MCF 10A (cell line): ENCODE measurements at regions of chr10 and their contacts with region 1.

Region 1: GRCh38 chr10:4344511-4344994 is 481.5 kb upstream of the AKR1E2 start:
- DNase-seq: peak; percentile 99
- H3K4me3 Mint-ChIP-seq: peak overlapping the region; percentile 48
- H3K27ac Mint-ChIP-seq: peak overlapping the region; percentile 99
- H3K4me1 Mint-ChIP-seq: peaks cover 26% of the 10 kb centered on the region
- H3K27me3 Mint-ChIP-seq: no peaks in the 10 kb centered on the region
- CTCF ChIP-seq: no peak

Region 2: DNA sequence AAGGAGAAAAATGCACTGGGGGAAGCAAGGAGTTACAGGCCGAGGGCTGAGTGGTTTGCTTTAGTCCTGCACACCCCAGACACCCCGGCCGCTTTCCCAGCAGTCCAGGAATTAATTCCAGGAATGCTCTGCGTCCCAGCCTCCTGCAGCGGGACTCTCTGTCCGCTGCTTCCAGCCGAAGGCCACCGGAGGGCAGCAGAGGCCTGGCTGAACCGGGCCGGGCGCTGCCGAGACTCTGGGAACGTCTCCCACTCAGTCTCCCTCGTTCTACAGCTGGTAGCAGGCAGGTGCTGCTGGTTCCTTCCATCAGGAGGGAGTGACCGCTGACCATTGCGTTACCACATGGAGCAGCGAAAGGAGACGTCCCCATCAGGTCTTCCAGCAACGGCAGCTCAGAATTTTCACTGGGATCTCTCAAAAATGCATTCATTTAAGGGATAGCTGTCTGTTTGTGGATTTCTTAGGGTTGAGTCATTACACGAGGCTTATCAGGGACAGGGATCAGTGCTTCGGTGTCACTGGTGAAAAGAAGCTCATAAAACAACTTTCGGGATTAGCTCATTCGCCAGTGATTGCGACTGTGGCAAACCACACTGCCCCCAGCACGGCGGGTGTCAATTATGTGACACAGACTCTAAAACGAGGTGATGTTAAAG is 1147.1 kb before region 1 on chr10:
- CTCF ChIA-PET with region 1: no interaction called
- POLR2A ChIA-PET with region 1: interaction called, 4 read pairs
- intact Hi-C with region 1: loop called (anchors 10 kb)
- DNase-seq: peak; percentile 80
- H3K4me3 Mint-ChIP-seq: peak overlapping the region; percentile 69
- H3K27ac Mint-ChIP-seq: peak overlapping the region; percentile 61
- H3K4me1 Mint-ChIP-seq: peaks cover 16% of the 10 kb centered on the region
- H3K27me3 Mint-ChIP-seq: no peaks in the 10 kb centered on the region
- CTCF ChIP-seq: peak; percentile 79

Region 3: GRCh38 chr10:3776796-3777571 is 567.6 kb before region 1 on chr10:
- CTCF ChIA-PET with region 1: no interaction called
- POLR2A ChIA-PET with region 1: interaction called, 39 read pairs
- intact Hi-C with region 1: no loop called
- DNase-seq: peak; percentile 92
- H3K4me3 Mint-ChIP-seq: peak overlapping the region; percentile 44
- H3K27ac Mint-ChIP-seq: peak overlapping the region; percentile 75
- H3K4me1 Mint-ChIP-seq: peaks cover 45% of the 10 kb centered on the region
- H3K27me3 Mint-ChIP-seq: no peaks in the 10 kb centered on the region
- CTCF ChIP-seq: no peak

Region 4: GRCh38 chr10:3895045-3895631 is 449.4 kb before region 1 on chr10:
- CTCF ChIA-PET with region 1: no interaction called
- POLR2A ChIA-PET with region 1: interaction called, 14 read pairs
- intact Hi-C with region 1: no loop called
- DNase-seq: peak; percentile 10
- H3K4me3 Mint-ChIP-seq: no peak overlapping the region
- H3K27ac Mint-ChIP-seq: no peak overlapping the region
- H3K4me1 Mint-ChIP-seq: peaks cover 31% of the 10 kb centered on the region
- H3K27me3 Mint-ChIP-seq: no peaks in the 10 kb centered on the region
- CTCF ChIP-seq: no peak

Region 5: GRCh38 chr10:4270116-4270515 is 74.4 kb before region 1 on chr10:
- CTCF ChIA-PET with region 1: interaction called, 3 read pairs
- POLR2A ChIA-PET with region 1: interaction called, 13 read pairs
- intact Hi-C with region 1: no loop called
- DNase-seq: peak; percentile 47
- H3K4me3 Mint-ChIP-seq: no peak overlapping the region
- H3K27ac Mint-ChIP-seq: peak overlapping the region; percentile 54
- H3K4me1 Mint-ChIP-seq: peaks cover 34% of the 10 kb centered on the region
- H3K27me3 Mint-ChIP-seq: no peaks in the 10 kb centered on the region
- CTCF ChIP-seq: no peak

Region 6: DNA sequence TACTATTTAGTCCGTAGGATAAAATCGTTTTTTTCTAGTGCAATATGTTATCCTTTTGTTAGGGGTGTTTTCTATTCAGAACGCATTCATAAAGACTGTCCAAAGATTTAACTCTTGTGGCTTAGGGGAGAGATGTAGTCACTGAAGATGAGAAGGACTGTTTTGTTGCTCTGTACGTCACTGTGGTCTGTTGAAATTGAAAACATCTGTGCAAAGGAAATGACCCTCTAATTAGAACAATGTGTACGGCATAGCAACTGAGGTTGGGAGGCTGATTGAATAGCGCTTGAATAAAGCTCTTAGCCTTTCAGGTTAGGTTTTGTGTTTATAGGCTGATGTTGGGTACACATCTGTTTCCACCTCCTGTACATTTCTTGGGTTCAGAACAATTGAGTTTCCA is 28.0 kb after region 1 on chr10:
- CTCF ChIA-PET with region 1: no interaction called
- POLR2A ChIA-PET with region 1: no interaction called
- intact Hi-C with region 1: no loop called
- DNase-seq: no peak
- H3K4me3 Mint-ChIP-seq: no peak overlapping the region
- H3K27ac Mint-ChIP-seq: no peak overlapping the region
- H3K4me1 Mint-ChIP-seq: no peaks in the 10 kb centered on the region
- H3K27me3 Mint-ChIP-seq: no peaks in the 10 kb centered on the region
- CTCF ChIP-seq: no peak

Region 7: DNA sequence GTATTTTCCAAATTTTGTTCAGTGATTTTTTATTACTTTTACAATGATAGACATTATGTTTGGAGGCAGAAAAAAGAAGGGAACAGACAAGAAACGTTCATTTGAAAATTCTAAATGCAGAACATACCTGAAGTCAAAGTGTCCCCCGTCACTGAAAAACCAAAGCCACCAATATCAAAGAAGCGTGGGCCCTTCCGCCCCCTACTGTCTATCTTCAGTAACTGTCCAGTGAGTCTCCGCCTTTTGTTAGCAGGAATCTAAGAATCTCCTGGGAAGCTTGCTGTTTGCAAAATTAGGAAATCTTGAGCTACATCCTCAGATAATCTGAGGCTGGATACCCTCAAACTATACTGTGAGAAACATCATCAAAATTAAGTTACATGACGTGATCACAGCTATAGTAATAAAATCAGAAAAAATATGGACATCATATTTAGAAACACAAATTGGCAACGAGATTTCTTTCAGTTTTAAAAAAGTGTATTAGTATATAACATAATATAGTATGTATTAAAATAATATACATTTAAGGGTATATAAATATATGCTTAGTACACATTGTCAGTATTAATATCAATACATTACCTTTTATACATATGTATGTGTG is 312.1 kb after region 1 on chr10:
- CTCF ChIA-PET with region 1: interaction called, 7 read pairs
- POLR2A ChIA-PET with region 1: interaction called, 5 read pairs
- intact Hi-C with region 1: loop called (anchors 2 kb)
- DNase-seq: peak; percentile 76
- H3K4me3 Mint-ChIP-seq: no peak overlapping the region
- H3K27ac Mint-ChIP-seq: peak overlapping the region; percentile 35
- H3K4me1 Mint-ChIP-seq: peaks cover 12% of the 10 kb centered on the region
- H3K27me3 Mint-ChIP-seq: no peaks in the 10 kb centered on the region
- CTCF ChIP-seq: peak; percentile 90